ENCODE measurements at regions of chr13 and their contacts with region 1.

Region 1: GRCh38 chr13:85806553-85807175 is 7.4 kb upstream of the SLITRK6 start:
- DNase-seq: no peak
- ATAC-seq: no peak
- H3K4me3 ChIP-seq: no peak overlapping the region
- H3K27ac ChIP-seq: no peak overlapping the region
- H3K4me1 ChIP-seq: no peaks in the 10 kb centered on the region
- H3K27me3 ChIP-seq: no peaks in the 10 kb centered on the region

Region 2: GRCh38 chr13:84896128-84896527 is 910.5 kb before region 1 on chr13:
- intact Hi-C with region 1: loop called in 2 of 4 experiments (anchors 5 to 10 kb)
- DNase-seq: peak in 1 of 3 donors; percentile 18
- ATAC-seq: no peak
- H3K4me3 ChIP-seq: no peak overlapping the region
- H3K27ac ChIP-seq: no peak overlapping the region
- H3K4me1 ChIP-seq: no peaks in the 10 kb centered on the region
- H3K27me3 ChIP-seq: no peaks in the 10 kb centered on the region

Region 3: GRCh38 chr13:84917252-84917878 is 889.3 kb before region 1 on chr13:
- intact Hi-C with region 1: loop called in 2 of 4 experiments (anchors 5 kb)
- DNase-seq: no peak
- ATAC-seq: no peak
- H3K4me3 ChIP-seq: no peak overlapping the region
- H3K27ac ChIP-seq: no peak overlapping the region
- H3K4me1 ChIP-seq: no peaks in the 10 kb centered on the region
- H3K27me3 ChIP-seq: no peaks in the 10 kb centered on the region

Measured in right cardiac atrium (tissue), 5 donors.